HCT116 (cell line): ENCODE measurements at regions of chr6 and their contacts with region 1.

Region 1: DNA sequence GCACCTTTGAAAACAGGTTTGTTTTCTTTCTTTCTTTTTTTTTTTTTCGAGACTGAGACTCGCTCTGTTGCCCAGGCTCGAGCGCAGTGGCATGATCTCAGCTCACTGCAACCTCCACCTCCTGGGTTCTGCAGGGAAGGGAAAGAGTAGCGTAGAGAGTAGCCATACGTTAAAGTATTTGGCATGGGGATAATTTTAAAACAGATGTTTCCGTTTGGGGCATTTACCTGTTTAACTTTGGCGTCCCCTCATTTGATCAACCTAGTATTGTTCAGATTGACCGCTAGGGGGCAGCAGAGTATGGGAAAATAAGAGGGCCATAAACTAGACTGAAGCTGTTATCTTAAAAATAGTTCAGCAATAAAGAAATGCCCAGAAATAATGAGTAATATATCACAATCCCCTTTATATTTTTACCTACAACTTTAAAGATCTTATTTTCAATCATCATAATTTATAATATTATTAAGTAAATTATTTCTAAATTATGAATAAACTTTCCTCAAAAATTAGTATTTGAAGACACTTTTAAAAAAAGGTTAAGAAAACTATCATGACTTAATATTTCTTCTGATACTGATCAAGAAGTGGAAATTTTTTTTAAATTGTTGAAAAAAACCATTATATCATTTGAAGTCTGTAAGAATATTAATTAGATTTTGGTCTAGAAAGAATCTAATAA is 7.6 kb upstream of the TAAR9 start:
- DNase-seq: peak; percentile 61
- ATAC-seq: peak; percentile 82
- H3K4me3 ChIP-seq: peak overlapping the region; percentile 10 to 33; a peak in 2 of 4 replicates
- H3K27ac ChIP-seq: no peak overlapping the region
- H3K4me1 ChIP-seq: peaks cover 20 to 27% of the 10 kb centered on the region in 2 experiments
- H3K27me3 ChIP-seq: peaks cover 12% of the 10 kb centered on the region; the same call in 1 of the 2 replicates
- CTCF ChIP-seq: peak; percentile 63 to 86 (median 75)
- POLR2A ChIP-seq: no peak
- RAD21 ChIP-seq: peak; percentile 86

Region 2: GRCh38 chr6:132715204-132715603 is 184.8 kb after region 1 on chr6:
- CTCF ChIA-PET with region 1: interaction called, 5 read pairs
- POLR2A ChIA-PET with region 1: no interaction called
- RAD21 ChIA-PET with region 1: interaction called in 1 of 2 experiments, 5 read pairs
- intact Hi-C with region 1: loop called (anchors 2 kb)
- DNase-seq: peak; percentile 49
- ATAC-seq: peak; percentile 100
- H3K4me3 ChIP-seq: no peak overlapping the region
- H3K27ac ChIP-seq: no peak overlapping the region
- H3K4me1 ChIP-seq: no peaks in the 10 kb centered on the region; a peak in 1 of 4 replicates
- H3K27me3 ChIP-seq: no peaks in the 10 kb centered on the region
- CTCF ChIP-seq: peak; percentile 19 to 49 (median 44); a peak in 4 of 6 replicates
- POLR2A ChIP-seq: no peak
- RAD21 ChIP-seq: peak; percentile 77

Region 3: DNA sequence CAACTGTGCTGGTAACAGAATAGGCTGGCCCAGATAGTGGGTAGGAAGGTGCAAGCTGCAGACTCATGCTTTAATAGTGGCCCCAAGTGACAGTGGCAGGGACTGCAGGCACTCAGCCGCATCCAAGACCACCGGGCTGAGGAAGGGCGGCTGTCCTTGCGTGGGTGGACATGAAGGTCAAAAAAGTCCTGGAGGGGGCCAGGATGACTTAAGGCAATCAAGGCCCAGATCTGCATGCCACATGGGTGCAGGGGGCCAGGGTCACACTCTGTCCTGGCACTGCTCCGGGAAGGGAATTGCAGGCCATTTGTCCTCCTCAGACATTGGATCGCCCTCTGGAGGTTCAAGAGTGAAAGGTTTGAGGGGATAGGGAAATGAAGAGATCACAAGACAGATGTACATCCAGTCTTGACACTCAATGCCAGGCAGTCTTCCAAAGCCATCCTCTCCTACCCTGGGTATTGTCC is 237.7 kb after region 1 on chr6:
- CTCF ChIA-PET with region 1: interaction called, 7 read pairs
- POLR2A ChIA-PET with region 1: no interaction called
- RAD21 ChIA-PET with region 1: no interaction called
- intact Hi-C with region 1: loop called (anchors 1 kb)
- DNase-seq: peak; percentile 40
- ATAC-seq: peak; percentile 97
- H3K4me3 ChIP-seq: no peak overlapping the region
- H3K27ac ChIP-seq: no peak overlapping the region
- H3K4me1 ChIP-seq: peaks cover 0 to 5% of the 10 kb centered on the region in 2 experiments; a peak in 2 of 4 replicates
- H3K27me3 ChIP-seq: no peaks in the 10 kb centered on the region
- CTCF ChIP-seq: peak; percentile 63 to 94 (median 73)
- POLR2A ChIP-seq: no peak
- RAD21 ChIP-seq: peak; percentile 67

Region 4: DNA sequence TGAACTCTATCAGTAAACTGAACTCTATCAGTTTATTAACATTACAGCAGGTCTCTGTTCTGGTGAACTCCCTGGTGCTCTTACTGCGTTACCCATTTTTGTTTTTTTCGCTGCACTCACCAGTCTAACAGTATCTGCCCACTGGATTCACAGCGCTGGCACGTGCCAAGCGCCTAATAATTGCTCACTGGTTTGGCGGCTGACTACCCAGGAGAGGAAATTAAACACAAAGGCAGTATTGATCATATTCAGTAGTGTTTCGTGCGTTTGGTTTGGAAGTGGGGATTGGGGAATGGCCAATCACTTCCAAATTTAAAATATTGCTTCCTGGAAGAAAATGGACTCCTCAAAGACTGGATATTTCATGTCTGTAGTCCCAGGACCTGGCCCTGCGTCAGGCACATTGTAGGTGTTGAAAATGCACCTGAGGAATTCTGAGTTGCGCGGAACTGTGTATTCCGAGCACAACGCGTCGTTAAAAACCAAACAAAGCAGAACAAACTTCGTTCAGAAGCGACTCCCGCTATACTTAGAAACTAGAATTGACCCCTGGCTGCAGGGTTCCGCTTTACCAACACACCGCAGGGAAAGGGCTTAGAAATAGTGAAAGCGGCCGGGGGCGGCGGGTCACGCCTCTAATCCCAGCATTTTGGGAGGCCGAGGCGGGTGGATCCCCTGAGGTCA is 282.9 kb after region 1 on chr6:
- CTCF ChIA-PET with region 1: no interaction called
- POLR2A ChIA-PET with region 1: no interaction called
- RAD21 ChIA-PET with region 1: no interaction called
- intact Hi-C with region 1: loop called (anchors 5 kb)
- DNase-seq: no peak
- ATAC-seq: peak; percentile 33
- H3K4me3 ChIP-seq: peak overlapping the region; percentile 94 to 95
- H3K27ac ChIP-seq: peak overlapping the region; percentile 93
- H3K4me1 ChIP-seq: peaks cover 9 to 51% of the 10 kb centered on the region in 2 experiments
- H3K27me3 ChIP-seq: no peaks in the 10 kb centered on the region
- CTCF ChIP-seq: no peak
- POLR2A ChIP-seq: no peak
- RAD21 ChIP-seq: no peak

Region 5: DNA sequence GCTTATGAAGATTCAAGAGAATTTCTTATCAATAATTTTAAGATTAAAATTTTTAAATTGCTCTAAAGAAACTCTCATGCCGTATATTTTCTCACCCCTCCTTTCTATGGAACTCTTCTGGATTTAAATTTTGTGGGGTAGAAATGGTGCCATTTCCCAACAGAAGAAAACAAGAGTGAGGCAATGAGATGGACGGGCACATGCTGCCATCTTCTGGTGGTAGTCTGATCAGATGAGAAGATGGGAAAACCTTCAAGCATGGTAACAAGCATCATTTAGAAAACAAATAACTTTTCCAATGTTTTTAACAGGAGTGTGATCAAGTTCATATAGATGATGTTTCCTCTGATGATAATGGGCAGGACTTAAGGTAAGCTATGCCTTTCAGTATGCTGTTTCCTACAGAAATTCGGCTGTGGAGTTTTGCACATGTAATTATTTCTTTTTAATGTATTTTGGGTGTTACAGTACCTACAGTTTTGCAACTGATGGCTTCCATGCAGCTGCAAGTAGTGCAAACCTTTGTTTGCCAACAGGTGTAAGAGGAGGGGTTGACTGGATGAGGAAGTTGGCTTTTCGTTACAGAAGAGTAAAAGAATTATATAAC is 982.1 kb after region 1 on chr6:
- CTCF ChIA-PET with region 1: no interaction called
- POLR2A ChIA-PET with region 1: no interaction called
- RAD21 ChIA-PET with region 1: no interaction called
- intact Hi-C with region 1: loop called (anchors 5 kb)
- DNase-seq: peak; percentile 44
- ATAC-seq: peak; percentile 75
- H3K4me3 ChIP-seq: no peak overlapping the region
- H3K27ac ChIP-seq: no peak overlapping the region
- H3K4me1 ChIP-seq: no peaks in the 10 kb centered on the region
- H3K27me3 ChIP-seq: no peaks in the 10 kb centered on the region
- CTCF ChIP-seq: peak; percentile 58 to 84 (median 72)
- POLR2A ChIP-seq: no peak
- RAD21 ChIP-seq: peak; percentile 86